Endothelial cell of umbilical vein (primary cell): ENCODE measurements at regions of chr12 and their contacts with region 1.

Region 1: DNA sequence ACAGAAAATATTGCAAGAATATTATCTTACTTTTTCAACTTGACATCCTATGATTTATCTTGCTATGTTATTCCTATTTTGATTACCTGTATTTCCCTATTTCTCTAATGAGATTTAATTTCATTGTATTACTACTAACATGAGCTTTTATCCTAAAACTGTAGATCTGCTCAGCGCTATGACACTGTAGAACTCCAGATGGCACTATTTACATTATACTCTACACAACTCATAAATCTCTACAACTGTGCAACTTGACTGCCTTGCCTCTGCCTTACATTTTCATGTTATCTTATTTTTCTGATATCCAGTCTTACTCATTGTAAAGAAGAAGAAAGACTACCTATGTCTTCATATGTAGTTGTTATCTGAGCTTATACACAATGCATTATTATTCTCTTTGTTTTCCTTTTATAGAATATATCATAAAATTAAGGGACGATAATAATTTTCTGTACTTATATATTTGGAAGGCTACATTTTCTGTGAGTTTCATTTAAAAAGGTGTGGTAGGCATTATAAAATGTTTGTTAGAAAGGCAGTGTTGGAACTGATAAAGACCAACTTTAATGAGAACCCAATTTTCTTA is 24.1 kb downstream of the NUP37 start:
- DNase-seq: peak; percentile 50
- H3K4me3 ChIP-seq: no peak overlapping the region
- H3K27ac ChIP-seq: no peak overlapping the region
- H3K4me1 ChIP-seq: no peaks in the 10 kb centered on the region
- H3K27me3 ChIP-seq: no peaks in the 10 kb centered on the region
- CTCF ChIP-seq: peak; percentile 31 to 38
- POLR2A ChIP-seq: no peak

Region 2: GRCh38 chr12:101909646-101910045 is 186.1 kb before region 1 on chr12:
- CTCF ChIA-PET with region 1: no interaction called
- POLR2A ChIA-PET with region 1: no interaction called
- dilution Hi-C with region 1: no loop called
- intact Hi-C with region 1: no loop called
- DNase-seq: no peak
- H3K4me3 ChIP-seq: peak overlapping the region in 1 of 3 experiments; percentile 3
- H3K27ac ChIP-seq: no peak overlapping the region
- H3K4me1 ChIP-seq: no peaks in the 10 kb centered on the region
- H3K27me3 ChIP-seq: no peaks in the 10 kb centered on the region
- CTCF ChIP-seq: no peak
- POLR2A ChIP-seq: no peak

Region 3: DNA sequence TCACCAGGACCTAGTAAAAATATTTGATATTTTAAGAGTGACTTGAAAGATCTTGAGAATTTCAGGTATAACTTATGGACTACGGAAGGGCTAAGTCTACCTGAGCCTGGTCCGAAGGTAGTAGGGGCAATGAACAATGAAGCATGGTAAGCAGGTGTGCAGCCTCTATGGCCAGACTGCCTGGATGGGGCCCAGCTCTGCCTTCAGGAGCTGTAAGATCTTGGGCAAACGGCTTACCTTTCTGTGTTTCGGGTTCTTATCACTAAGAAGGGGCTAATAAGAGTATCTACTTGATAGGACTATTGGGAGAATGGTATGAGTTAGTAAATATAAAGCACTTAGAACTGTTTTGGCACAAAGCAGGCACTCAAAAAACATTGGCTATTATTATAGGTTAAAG is 14.9 kb before region 1 on chr12:
- CTCF ChIA-PET with region 1: interaction called, 17 read pairs
- POLR2A ChIA-PET with region 1: no interaction called
- dilution Hi-C with region 1: no loop called
- intact Hi-C with region 1: no loop called
- DNase-seq: no peak
- H3K4me3 ChIP-seq: no peak overlapping the region
- H3K27ac ChIP-seq: no peak overlapping the region
- H3K4me1 ChIP-seq: no peaks in the 10 kb centered on the region
- H3K27me3 ChIP-seq: no peaks in the 10 kb centered on the region
- CTCF ChIP-seq: no peak
- POLR2A ChIP-seq: no peak

Region 4: GRCh38 chr12:102300824-102301461 is 205.2 kb after region 1 on chr12:
- CTCF ChIA-PET with region 1: interaction called, 10 read pairs
- POLR2A ChIA-PET with region 1: no interaction called
- dilution Hi-C with region 1: no loop called
- intact Hi-C with region 1: no loop called
- DNase-seq: peak; percentile 50
- H3K4me3 ChIP-seq: no peak overlapping the region
- H3K27ac ChIP-seq: no peak overlapping the region
- H3K4me1 ChIP-seq: no peaks in the 10 kb centered on the region
- H3K27me3 ChIP-seq: no peaks in the 10 kb centered on the region
- CTCF ChIP-seq: peak; percentile 24 to 38
- POLR2A ChIP-seq: no peak

Region 5: GRCh38 chr12:102702447-102703114 is 606.8 kb after region 1 on chr12:
- CTCF ChIA-PET with region 1: interaction called, 17 read pairs
- POLR2A ChIA-PET with region 1: no interaction called
- dilution Hi-C with region 1: no loop called
- intact Hi-C with region 1: loop called (anchors 1 kb)
- DNase-seq: peak; percentile 24
- H3K4me3 ChIP-seq: no peak overlapping the region
- H3K27ac ChIP-seq: no peak overlapping the region
- H3K4me1 ChIP-seq: no peaks in the 10 kb centered on the region
- H3K27me3 ChIP-seq: no peaks in the 10 kb centered on the region
- CTCF ChIP-seq: peak; percentile 37 to 52
- POLR2A ChIP-seq: no peak